ENCODE measurements at regions of chr1 and their contacts with region 1.

Region 1: GRCh38 chr1:19643602-19644394 is at the start of gene NBL1:
- DNase-seq: peak; percentile 81
- total RNA-seq, gene NBL1: 55.9 TPM

Region 2: DNA sequence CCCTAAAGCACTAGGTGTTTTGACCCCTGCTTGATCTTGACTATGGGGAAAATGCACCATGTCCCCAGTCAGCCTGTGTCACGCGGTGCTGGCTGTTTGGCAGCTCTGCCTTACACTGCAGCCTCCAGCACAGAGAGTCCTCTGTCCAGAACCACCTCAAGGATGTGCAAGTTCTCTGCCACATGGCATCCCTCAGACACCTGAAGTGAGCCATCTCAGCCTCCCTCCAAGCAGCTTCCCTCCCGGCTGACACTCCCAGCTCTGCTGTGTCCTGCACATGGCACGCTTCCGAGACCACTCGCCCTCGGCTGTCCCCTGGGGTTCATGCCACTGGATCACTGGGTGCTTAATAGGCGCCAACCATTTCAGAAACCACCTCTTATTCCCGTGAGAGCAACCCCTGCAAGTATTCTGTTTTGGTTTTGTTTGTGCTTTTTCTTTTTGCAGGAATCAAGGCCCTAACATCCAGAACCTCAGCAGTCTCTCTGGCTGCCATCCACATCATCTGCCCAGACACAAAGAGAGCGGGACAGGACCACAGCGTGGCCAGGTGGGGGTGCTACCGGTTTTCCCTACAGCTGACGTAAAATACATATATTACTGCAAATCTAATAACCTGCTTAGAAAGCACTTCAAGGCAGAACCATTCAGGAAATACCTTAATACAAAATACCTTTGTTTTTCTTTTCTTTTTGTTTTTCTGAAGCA is 204.2 kb before region 1 on chr1:
- intact Hi-C with region 1: loop called (anchors 5 kb)
- DNase-seq: no peak

Region 3: DNA sequence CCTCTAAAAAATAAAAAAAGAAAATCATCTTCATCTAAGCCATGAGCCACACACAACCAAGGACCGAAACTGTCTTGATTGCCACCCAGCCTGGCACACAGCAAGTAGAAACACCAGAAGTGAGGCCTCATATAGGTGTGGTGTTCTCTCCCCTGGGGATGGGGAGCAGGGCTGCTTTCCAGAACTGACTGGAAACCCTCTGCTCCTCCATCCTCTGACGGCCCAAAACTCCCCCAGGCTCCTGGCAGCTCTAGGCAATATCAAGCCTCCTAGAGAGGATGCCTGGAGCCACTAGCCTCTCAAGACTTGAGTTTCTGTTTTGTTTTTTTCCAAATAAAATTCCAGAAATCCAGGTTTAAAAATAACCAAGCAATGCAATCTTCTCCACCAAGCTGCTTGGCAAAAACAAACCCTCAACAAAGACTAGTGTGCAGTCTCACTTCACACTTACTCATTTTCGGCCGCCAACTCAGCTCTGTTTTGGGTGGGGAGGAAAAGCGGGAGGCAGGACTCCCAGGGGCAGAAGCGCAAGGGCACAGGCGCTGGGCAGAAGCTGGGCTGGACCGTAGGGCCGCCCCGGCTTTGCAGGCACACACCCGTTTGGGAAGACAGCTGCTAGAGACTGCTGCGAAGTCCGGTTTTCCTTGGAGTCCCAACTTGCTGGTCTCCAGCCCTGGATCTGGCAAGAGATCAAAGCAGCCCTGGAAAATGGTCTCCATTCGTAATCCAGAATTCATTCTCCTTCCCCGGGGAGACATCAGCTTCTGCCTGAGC is 80.3 kb before region 1 on chr1:
- intact Hi-C with region 1: loop called (anchors 5 kb)
- DNase-seq: peak; percentile 76

Region 4: DNA sequence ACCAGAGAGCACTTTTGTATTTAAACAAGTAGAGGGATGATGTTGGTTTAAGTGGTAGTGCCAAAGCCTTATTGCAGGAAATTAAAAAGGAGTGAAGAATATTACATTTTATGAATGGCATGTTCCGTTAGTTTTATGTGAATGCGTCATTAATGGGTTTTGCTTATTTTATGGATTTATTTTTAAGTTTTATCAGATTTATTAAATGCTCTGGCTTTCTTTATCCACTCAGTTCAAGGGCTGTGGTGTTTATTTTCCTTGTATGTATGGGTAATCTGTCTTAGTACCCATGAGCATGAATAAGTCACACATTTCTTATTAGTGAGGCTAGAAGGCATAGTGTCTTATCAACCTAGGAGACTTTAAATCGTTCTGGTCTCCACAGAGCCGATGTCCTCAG is 41.3 kb before region 1 on chr1:
- intact Hi-C with region 1: loop called (anchors 5 kb)
- DNase-seq: no peak